ENCODE measurements at regions of chr15 and their contacts with region 1.

Region 1: GRCh38 chr15:68053701-68054627 is at the start of gene PIAS1:
- DNase-seq: peak; percentile 95
- ATAC-seq: peak; percentile 92
- H3K4me3 ChIP-seq: peak within 1 kb of the TSS; percentile 77 to 99 (median 88)
- H3K4me3 Mint-ChIP-seq: peak within 1 kb of the TSS; percentile 93
- H3K27ac ChIP-seq: peak within 1 kb of the TSS; percentile 78 to 92
- H3K27ac Mint-ChIP-seq: peak within 1 kb of the TSS; percentile 96
- H3K4me1 ChIP-seq: peaks cover 11 to 26% of the 10 kb centered on the region in 2 donors
- H3K4me1 Mint-ChIP-seq: peaks cover 40% of the 10 kb centered on the region
- H3K27me3 ChIP-seq: no peaks in the 10 kb centered on the region
- H3K27me3 Mint-ChIP-seq: no peaks in the 10 kb centered on the region
- CTCF ChIP-seq: no peak
- total RNA-seq, gene PIAS1: 87.3 and 97.5 TPM in 2 replicates

Region 2: GRCh38 chr15:66356345-66357236 is 1697.4 kb before region 1 on chr15 and contains the start of gene TIPIN:
- CTCF ChIA-PET with region 1: no interaction called
- POLR2A ChIA-PET with region 1: no interaction called
- intact Hi-C with region 1: loop called (anchors 5 kb)
- DNase-seq: peak; percentile 98
- ATAC-seq: peak; percentile 95
- H3K4me3 ChIP-seq: peak within 1 kb of the TSS; percentile 35 to 89 (median 84)
- H3K4me3 Mint-ChIP-seq: peak within 1 kb of the TSS; percentile 91
- H3K27ac ChIP-seq: peak within 1 kb of the TSS; percentile 58 to 71
- H3K27ac Mint-ChIP-seq: peak within 1 kb of the TSS; percentile 83
- H3K4me1 ChIP-seq: peaks cover 11 to 28% of the 10 kb centered on the region in 2 donors
- H3K4me1 Mint-ChIP-seq: peaks cover 24% of the 10 kb centered on the region
- H3K27me3 ChIP-seq: no peaks in the 10 kb centered on the region
- H3K27me3 Mint-ChIP-seq: no peaks in the 10 kb centered on the region
- CTCF ChIP-seq: no peak
- total RNA-seq, gene TIPIN: 8.8 and 8.9 TPM in 2 replicates

Region 3: DNA sequence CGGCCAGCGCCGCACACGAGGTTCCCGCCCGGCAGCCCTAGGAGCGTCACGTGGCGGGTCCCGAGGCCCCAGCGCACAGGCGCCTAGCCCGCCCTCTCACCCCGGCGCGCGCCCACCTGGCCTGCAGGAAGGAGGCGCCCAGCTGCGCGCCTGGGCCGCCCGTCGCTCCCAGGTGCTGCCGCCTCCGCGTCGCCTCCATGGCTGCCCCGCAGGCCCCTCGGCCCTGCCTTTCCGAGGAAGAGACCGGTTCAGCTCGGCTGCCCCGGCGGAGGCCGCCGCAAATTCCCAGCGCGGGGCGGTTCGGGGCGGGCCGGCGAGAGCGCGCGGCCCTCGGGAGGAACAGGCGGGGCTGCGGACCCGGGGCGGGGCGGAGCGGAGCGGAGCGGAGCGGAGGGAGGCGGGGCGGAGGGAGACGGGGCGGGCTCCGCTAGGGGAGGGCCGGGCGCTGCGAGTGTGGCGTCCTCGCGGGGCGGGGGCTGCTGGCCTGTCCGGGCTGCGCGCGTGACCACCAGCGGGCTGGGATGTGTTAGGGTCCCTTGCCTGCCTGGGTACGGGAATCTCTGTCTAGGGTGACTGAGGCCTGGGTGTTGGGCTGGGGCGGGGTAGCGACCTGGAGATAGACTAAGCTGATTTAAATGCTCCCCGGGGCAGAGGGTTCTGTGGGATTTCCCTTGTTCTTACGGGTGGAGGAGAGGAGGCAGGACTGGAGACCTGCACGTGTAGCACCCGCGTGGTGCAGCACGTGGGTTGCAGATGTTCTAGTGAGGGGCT is 175.6 kb after region 1 on chr15 and contains the start of gene CLN6:
- CTCF ChIA-PET with region 1: no interaction called
- POLR2A ChIA-PET with region 1: interaction called, 9 read pairs
- intact Hi-C with region 1: loop called (anchors 1 kb)
- DNase-seq: peak; percentile 93
- ATAC-seq: peak; percentile 87
- H3K4me3 ChIP-seq: peak within 1 kb of the TSS; percentile 57 to 76 (median 73)
- H3K4me3 Mint-ChIP-seq: peak within 1 kb of the TSS; percentile 96
- H3K27ac ChIP-seq: peak within 1 kb of the TSS; percentile 60 to 88
- H3K27ac Mint-ChIP-seq: peak within 1 kb of the TSS; percentile 92
- H3K4me1 ChIP-seq: peaks cover 23 to 42% of the 10 kb centered on the region in 2 donors
- H3K4me1 Mint-ChIP-seq: peaks cover 45% of the 10 kb centered on the region
- H3K27me3 ChIP-seq: peaks cover 0 to 2% (median 0%) of the 10 kb centered on the region in 4 experiments
- H3K27me3 Mint-ChIP-seq: no peaks in the 10 kb centered on the region
- CTCF ChIP-seq: no peak
- total RNA-seq, gene CLN6: 22.8 and 31.5 TPM in 2 replicates